ENCODE measurements at regions of chr7 and their contacts with region 1.

Region 1: GRCh38 chr7:111741811-111742240 is 179.5 kb upstream of the IMMP2L start:
- DNase-seq: peak; percentile 80 to 82
- ATAC-seq: peak; percentile 89 to 94
- H3K4me3 ChIP-seq: no peak overlapping the region
- H3K27ac ChIP-seq: no peak overlapping the region
- H3K4me1 ChIP-seq: no peaks in the 10 kb centered on the region
- CTCF ChIP-seq: peak; percentile 89
- EP300 ChIP-seq: no peak
- POLR2A ChIP-seq: no peak
- RAD21 ChIP-seq: peak; percentile 84 to 86

Region 2: DNA sequence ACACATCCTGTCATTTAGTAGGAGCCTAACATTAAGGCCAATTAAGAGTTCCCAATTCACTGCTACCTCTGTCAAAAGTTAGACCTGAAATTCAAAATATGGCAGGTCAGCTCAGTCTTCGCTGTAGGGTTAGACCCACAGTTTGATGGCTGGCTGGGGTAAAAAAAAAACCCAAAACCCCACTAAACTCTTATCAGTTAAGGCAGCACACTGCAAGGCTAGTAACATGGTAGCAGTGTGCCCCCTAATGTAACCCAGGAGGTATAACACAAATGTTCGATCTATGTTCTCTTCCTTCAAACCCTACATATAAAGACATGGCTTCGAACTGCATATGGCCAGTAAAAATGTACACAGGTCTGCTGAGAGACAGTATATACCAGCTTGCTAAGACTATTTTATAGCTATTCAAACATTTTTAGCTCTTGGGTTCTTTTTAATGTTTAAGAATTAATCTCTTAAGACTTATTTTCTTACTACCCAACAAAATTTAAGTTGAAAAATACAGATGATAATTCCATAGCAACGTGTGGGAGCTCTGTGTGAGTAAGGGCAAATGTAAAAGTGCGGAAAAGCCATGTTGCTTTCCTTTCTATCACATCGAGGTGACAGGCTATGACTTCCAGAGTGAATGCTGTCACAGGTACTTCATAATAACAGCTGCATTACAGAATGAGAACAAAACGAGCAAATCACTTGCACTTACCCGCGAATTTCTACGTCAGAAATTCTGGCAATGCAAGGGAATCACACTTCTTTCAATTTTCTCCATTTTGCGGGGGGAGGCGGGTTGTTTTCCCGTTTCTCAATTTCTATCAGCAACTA is 11.1 kb before region 1 on chr7:
- CTCF ChIA-PET with region 1: interaction called, 13 read pairs
- POLR2A ChIA-PET with region 1: no interaction called
- DNase-seq: peak; percentile 20 to 73
- ATAC-seq: peak; percentile 49 to 91; a peak in 3 of 6 replicates
- H3K4me3 ChIP-seq: no peak overlapping the region
- H3K27ac ChIP-seq: peak overlapping the region in 1 of 2 experiments; percentile 43; a peak in 2 of 6 replicates
- H3K4me1 ChIP-seq: peaks cover 18% of the 10 kb centered on the region
- CTCF ChIP-seq: peak; percentile 69
- EP300 ChIP-seq: no peak
- POLR2A ChIP-seq: no peak
- RAD21 ChIP-seq: peak; percentile 85 to 88

Region 3: GRCh38 chr7:111752022-111752582 is 10.3 kb after region 1 on chr7:
- CTCF ChIA-PET with region 1: interaction called, 26 read pairs
- POLR2A ChIA-PET with region 1: no interaction called
- DNase-seq: peak; percentile 52
- ATAC-seq: peak; percentile 91 to 97
- H3K4me3 ChIP-seq: no peak overlapping the region
- H3K27ac ChIP-seq: no peak overlapping the region
- H3K4me1 ChIP-seq: no peaks in the 10 kb centered on the region
- CTCF ChIP-seq: peak; percentile 84
- EP300 ChIP-seq: no peak
- POLR2A ChIP-seq: no peak
- RAD21 ChIP-seq: peak; percentile 56 to 67

Region 4: DNA sequence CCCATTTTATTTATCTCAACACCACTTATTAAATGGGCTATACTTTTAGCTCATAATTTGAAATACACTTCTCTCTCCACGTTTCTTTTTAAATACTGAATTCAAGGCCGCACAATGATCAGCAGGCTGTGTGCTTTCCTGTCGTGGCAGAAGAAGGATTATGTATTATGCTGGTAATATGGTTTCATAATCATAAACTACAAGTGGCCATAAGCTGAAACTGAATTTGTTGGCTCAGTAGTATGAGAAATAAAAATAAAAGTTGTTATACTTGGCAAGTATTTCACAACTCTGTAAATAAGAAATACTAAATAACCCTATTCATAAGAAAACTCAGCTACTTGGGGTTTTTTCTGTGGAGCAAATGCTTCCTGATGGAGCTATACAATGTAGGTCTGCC is 150.8 kb after region 1 on chr7:
- CTCF ChIA-PET with region 1: no interaction called
- POLR2A ChIA-PET with region 1: no interaction called
- DNase-seq: no peak
- ATAC-seq: no peak
- H3K4me3 ChIP-seq: no peak overlapping the region
- H3K27ac ChIP-seq: no peak overlapping the region
- H3K4me1 ChIP-seq: no peaks in the 10 kb centered on the region
- CTCF ChIP-seq: no peak
- EP300 ChIP-seq: no peak
- POLR2A ChIP-seq: no peak
- RAD21 ChIP-seq: no peak

Measured in A549 (cell line).